Activated CD4-positive, alpha-beta T cell treated with anti-CD3 and anti-CD28 coated beads for 36 hours (primary cell): ENCODE measurements at regions of chr1 and their contacts with region 1.

Region 1: GRCh38 chr1:196933531-196934189 is 9.9 kb upstream of the CFHR2 start:
- DNase-seq: no peak
- ATAC-seq: no peak
- H3K4me3 Mint-ChIP-seq: no peak overlapping the region
- H3K27ac Mint-ChIP-seq: no peak overlapping the region
- H3K4me1 Mint-ChIP-seq: no peaks in the 10 kb centered on the region
- H3K27me3 Mint-ChIP-seq: no peaks in the 10 kb centered on the region

Region 2: DNA sequence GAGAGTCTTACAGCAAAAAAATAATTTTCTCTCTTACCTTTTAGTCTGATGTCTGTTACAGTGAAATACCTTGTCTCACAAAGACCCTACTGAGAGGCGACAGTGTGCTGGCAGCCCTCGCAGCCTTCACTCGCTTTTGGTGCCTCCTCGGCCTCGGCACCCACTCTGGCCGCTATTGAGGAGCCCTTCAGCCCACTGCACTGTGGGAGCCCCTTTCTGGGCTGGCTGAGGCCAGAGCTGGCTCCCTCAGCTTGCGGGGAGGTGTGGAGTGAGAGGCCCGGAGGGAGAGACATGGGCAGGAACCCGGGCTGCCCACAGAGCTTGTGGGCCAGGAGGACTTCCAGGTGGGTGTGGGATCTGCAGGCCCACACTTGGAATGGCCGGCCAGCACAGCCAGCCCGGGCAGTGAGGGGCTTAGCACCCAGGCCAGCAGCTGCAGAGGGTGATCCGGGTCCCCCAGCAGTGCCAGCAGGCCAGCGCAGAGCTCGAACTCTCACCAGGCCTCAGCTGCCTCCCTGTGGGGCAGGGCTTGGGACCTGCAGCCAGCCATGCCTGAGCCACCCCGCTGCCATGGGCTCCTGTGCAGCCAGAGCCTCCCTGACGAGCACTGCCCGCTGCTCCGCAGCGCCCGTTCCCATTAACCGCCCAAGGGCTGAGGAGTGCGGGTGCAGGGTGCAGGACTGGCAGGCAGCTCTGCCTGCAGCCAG is 125.0 kb before region 1 on chr1:
- CTCF ChIA-PET with region 1: no interaction called
- POLR2A ChIA-PET with region 1: no interaction called
- intact Hi-C with region 1: loop called in 1 of 2 experiments (anchors 5 kb)
- DNase-seq: no peak
- ATAC-seq: no peak
- H3K4me3 Mint-ChIP-seq: no peak overlapping the region
- H3K27ac Mint-ChIP-seq: no peak overlapping the region
- H3K4me1 Mint-ChIP-seq: no peaks in the 10 kb centered on the region
- H3K27me3 Mint-ChIP-seq: no peaks in the 10 kb centered on the region